Ovary (tissue), 10 donors: ENCODE measurements at regions of chr19 and their contacts with region 1.

Region 1: GRCh38 chr19:9934132-9934950 is 2.0 kb downstream of the OLFM2 start:
- DNase-seq: peak; percentile 81 to 90 (median 83)
- H3K4me3 ChIP-seq: no peak overlapping the region
- H3K27ac ChIP-seq: peak overlapping the region in 1 of 2 donors; percentile 23
- H3K4me1 ChIP-seq: peaks cover 2% of the 10 kb centered on the region
- H3K27me3 ChIP-seq: no peaks in the 10 kb centered on the region
- CTCF ChIP-seq: peak; percentile 81 to 94 (median 82)
- EP300 ChIP-seq: no peak
- POLR2A ChIP-seq: no peak

Region 2: GRCh38 chr19:9885077-9885552 is 49.2 kb before region 1 on chr19:
- intact Hi-C with region 1: no loop called
- DNase-seq: peak in 4 of 5 donors; percentile 20 to 34 (median 22)
- H3K4me3 ChIP-seq: no peak overlapping the region
- H3K27ac ChIP-seq: no peak overlapping the region
- H3K4me1 ChIP-seq: no peaks in the 10 kb centered on the region
- H3K27me3 ChIP-seq: no peaks in the 10 kb centered on the region
- CTCF ChIP-seq: no peak
- EP300 ChIP-seq: no peak
- POLR2A ChIP-seq: no peak

Region 3: DNA sequence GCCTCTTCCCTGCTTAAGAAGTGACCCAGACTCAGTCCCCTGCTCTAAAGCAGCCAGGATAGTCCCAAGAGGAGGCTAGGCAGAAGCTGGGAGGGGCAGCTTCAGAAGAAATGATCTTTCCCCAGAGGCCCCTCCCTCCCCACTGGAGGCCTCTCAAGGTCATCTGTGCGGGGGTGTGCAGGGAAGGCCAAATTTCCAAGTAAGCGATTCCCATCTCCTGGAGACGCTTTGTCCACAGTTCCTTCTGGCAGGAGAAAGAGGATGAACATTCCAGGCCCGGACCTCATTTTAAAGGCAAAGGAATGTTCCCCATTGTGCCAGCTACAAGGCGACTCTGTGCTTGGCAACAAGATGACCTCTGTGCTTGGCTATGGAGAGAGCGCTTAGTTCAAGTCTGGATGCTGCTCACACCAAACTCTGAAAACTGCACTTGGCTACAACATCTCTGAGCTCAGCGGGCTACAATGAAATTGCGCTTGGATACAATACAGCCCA is 52.5 kb after region 1 on chr19:
- intact Hi-C with region 1: loop called in 1 of 4 experiments (anchors 5 kb)
- DNase-seq: peak; percentile 42 to 56 (median 49)
- H3K4me3 ChIP-seq: no peak overlapping the region
- H3K27ac ChIP-seq: no peak overlapping the region
- H3K4me1 ChIP-seq: peaks cover 7% of the 10 kb centered on the region
- H3K27me3 ChIP-seq: no peaks in the 10 kb centered on the region
- CTCF ChIP-seq: no peak
- EP300 ChIP-seq: no peak
- POLR2A ChIP-seq: no peak

Region 4: GRCh38 chr19:10006335-10006708 is 72.0 kb after region 1 on chr19:
- intact Hi-C with region 1: loop called in 2 of 4 experiments (anchors 5 to 10 kb)
- DNase-seq: peak; percentile 62 to 77 (median 66)
- H3K4me3 ChIP-seq: no peak overlapping the region
- H3K27ac ChIP-seq: peak overlapping the region; percentile 41 to 70
- H3K4me1 ChIP-seq: peaks cover 13% of the 10 kb centered on the region
- H3K27me3 ChIP-seq: no peaks in the 10 kb centered on the region
- CTCF ChIP-seq: no peak
- EP300 ChIP-seq: no peak
- POLR2A ChIP-seq: no peak

Region 5: GRCh38 chr19:10251792-10252694 is 317.7 kb after region 1 on chr19 and contains the start of gene MRPL4:
- intact Hi-C with region 1: loop called in 3 of 4 experiments (anchors 5 to 10 kb)
- DNase-seq: peak; percentile 95 to 97 (median 96)
- H3K4me3 ChIP-seq: peak within 1 kb of the TSS; percentile 72
- H3K27ac ChIP-seq: peak within 1 kb of the TSS; percentile 54 to 76
- H3K4me1 ChIP-seq: peaks cover 6% of the 10 kb centered on the region
- H3K27me3 ChIP-seq: no peaks in the 10 kb centered on the region
- CTCF ChIP-seq: peak in 2 of 3 donors; percentile 14 to 54
- EP300 ChIP-seq: no peak
- POLR2A ChIP-seq: no peak
- total RNA-seq, gene MRPL4: 42.2 to 73.3 (median 58.9) TPM

Region 6: GRCh38 chr19:10388957-10389356 is 454.6 kb after region 1 on chr19:
- intact Hi-C with region 1: loop called in 2 of 4 experiments (anchors 5 to 10 kb)
- DNase-seq: peak; percentile 81 to 93 (median 92)
- H3K4me3 ChIP-seq: no peak overlapping the region
- H3K27ac ChIP-seq: no peak overlapping the region
- H3K4me1 ChIP-seq: no peaks in the 10 kb centered on the region
- H3K27me3 ChIP-seq: no peaks in the 10 kb centered on the region
- CTCF ChIP-seq: peak; percentile 84 to 91 (median 86)
- EP300 ChIP-seq: no peak
- POLR2A ChIP-seq: no peak